Breast epithelium (tissue), 4 donors: ENCODE measurements at regions of chr13 and their contacts with region 1.

Region 1: DNA sequence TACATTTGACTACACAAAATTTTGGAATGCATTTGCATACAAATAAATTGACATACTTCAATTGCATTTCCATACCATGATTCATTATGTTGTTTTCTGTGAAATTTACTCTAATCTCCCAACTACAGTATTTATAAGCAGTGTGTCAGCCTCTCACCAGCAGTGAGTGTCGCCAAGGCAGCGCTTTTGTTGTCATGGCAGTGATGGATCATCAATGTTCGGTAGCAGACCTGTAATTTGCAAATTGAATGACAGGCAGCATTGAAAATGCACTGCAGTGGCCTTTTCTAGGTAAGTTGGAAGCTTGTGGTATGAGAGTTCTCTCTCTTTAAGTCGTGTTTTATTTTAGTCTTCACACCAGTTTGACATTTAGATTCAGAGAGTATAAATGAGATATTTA is 534.1 kb downstream of the PCDH17 start:
- DNase-seq: no peak
- H3K4me3 ChIP-seq: no peak overlapping the region
- H3K27ac ChIP-seq: no peak overlapping the region
- H3K4me1 ChIP-seq: no peaks in the 10 kb centered on the region
- H3K27me3 ChIP-seq: no peaks in the 10 kb centered on the region
- CTCF ChIP-seq: no peak
- POLR2A ChIP-seq: no peak

Region 2: DNA sequence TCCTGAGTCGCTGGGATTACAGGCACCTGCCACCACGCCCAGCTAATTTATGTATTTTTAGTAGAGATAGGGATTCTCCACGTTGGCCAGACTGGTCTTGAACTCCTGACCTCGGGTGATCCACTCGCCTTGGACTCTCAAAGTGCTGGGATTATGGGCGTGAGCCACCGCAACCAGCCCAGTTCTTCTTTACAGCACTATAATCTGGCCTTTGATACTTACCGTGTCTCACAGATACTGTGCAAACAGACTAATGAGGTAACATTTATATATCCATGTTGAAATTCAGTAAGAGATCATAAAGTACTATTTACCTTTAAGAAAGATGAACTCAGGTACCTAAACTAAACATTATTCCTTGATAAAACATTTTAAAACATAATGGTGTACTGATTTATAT is 1146.7 kb before region 1 on chr13:
- intact Hi-C with region 1: loop called (anchors 10 kb)
- DNase-seq: no peak
- H3K4me3 ChIP-seq: no peak overlapping the region
- H3K27ac ChIP-seq: no peak overlapping the region
- H3K4me1 ChIP-seq: no peaks in the 10 kb centered on the region
- H3K27me3 ChIP-seq: no peaks in the 10 kb centered on the region
- CTCF ChIP-seq: no peak
- POLR2A ChIP-seq: no peak